Activated T-helper 1 cell treated with anti-CD3 and anti-CD28 coated beads, Interleukin-12 subunit alpha, Interleukin-12 subunit beta, Interleukin-2, Interleukin-4 antibody, amounts not matched to agents 30 ng/mL and 10 ng/mL and 1 ng/mL, durations not matched to agents 14 hours and 24 hours and 36 hours (primary cell): ENCODE measurements at regions of chr1 and their contacts with region 1.

Region 1: GRCh38 chr1:106780806-106781569 is 275.5 kb upstream of the PRMT6 start:
- DNase-seq: no peak
- H3K4me3 Mint-ChIP-seq: no peak overlapping the region
- H3K27ac Mint-ChIP-seq: no peak overlapping the region
- H3K4me1 Mint-ChIP-seq: no peaks in the 10 kb centered on the region
- H3K27me3 Mint-ChIP-seq: no peaks in the 10 kb centered on the region

Region 2: GRCh38 chr1:106754949-106755348 is 26.0 kb before region 1 on chr1:
- intact Hi-C with region 1: loop called (anchors 1 kb)
- DNase-seq: no peak
- H3K4me3 Mint-ChIP-seq: no peak overlapping the region
- H3K27ac Mint-ChIP-seq: no peak overlapping the region
- H3K4me1 Mint-ChIP-seq: no peaks in the 10 kb centered on the region
- H3K27me3 Mint-ChIP-seq: no peaks in the 10 kb centered on the region